ENCODE measurements at regions of chr20 and their contacts with region 1.

Region 1: GRCh38 chr20:63442100-63442493 is 30.4 kb downstream of the KCNQ2 start:
- DNase-seq: peak; percentile 29
- H3K4me3 ChIP-seq: no peak overlapping the region
- H3K27ac ChIP-seq: no peak overlapping the region
- H3K4me1 ChIP-seq: no peaks in the 10 kb centered on the region
- H3K27me3 ChIP-seq: peaks cover 2% of the 10 kb centered on the region
- CTCF ChIP-seq: peak; percentile 40 to 74

Region 2: GRCh38 chr20:63495741-63496595 is 53.9 kb after region 1 on chr20:
- CTCF ChIA-PET with region 1: no interaction called
- dilution Hi-C with region 1: no loop called
- in situ Hi-C with region 1: no loop called
- intact Hi-C with region 1: loop called (anchors 5 kb)
- DNase-seq: peak; percentile 35
- H3K4me3 ChIP-seq: peak overlapping the region in 1 of 3 experiments; percentile 28
- H3K27ac ChIP-seq: no peak overlapping the region
- H3K4me1 ChIP-seq: peaks cover 10% of the 10 kb centered on the region
- H3K27me3 ChIP-seq: peaks cover 5% of the 10 kb centered on the region
- CTCF ChIP-seq: peak; percentile 66 to 93

Region 3: DNA sequence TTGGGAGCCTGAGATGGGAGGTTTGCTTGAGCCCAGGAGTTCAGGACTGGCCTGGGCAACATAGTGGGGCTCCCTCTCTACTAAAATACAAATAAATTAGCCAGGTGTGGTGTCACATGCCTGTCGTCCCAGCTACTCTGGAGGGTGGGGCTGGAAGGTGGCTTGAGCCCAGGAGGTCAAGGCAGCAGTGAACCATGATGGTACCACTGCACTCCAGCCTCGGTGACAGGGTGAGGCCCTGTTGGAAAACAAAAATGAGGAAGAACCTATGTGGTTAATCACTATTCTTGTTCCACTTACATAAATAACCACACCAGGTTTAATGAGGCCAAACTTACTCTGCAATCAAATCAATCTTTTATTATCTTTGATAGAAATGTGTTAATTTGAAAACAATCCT is 83.9 kb after region 1 on chr20:
- CTCF ChIA-PET with region 1: no interaction called
- dilution Hi-C with region 1: no loop called
- in situ Hi-C with region 1: no loop called
- intact Hi-C with region 1: loop called (anchors 2 kb)
- DNase-seq: no peak
- H3K4me3 ChIP-seq: no peak overlapping the region
- H3K27ac ChIP-seq: no peak overlapping the region
- H3K4me1 ChIP-seq: peaks cover 11% of the 10 kb centered on the region
- H3K27me3 ChIP-seq: no peaks in the 10 kb centered on the region
- CTCF ChIP-seq: no peak

Region 4: DNA sequence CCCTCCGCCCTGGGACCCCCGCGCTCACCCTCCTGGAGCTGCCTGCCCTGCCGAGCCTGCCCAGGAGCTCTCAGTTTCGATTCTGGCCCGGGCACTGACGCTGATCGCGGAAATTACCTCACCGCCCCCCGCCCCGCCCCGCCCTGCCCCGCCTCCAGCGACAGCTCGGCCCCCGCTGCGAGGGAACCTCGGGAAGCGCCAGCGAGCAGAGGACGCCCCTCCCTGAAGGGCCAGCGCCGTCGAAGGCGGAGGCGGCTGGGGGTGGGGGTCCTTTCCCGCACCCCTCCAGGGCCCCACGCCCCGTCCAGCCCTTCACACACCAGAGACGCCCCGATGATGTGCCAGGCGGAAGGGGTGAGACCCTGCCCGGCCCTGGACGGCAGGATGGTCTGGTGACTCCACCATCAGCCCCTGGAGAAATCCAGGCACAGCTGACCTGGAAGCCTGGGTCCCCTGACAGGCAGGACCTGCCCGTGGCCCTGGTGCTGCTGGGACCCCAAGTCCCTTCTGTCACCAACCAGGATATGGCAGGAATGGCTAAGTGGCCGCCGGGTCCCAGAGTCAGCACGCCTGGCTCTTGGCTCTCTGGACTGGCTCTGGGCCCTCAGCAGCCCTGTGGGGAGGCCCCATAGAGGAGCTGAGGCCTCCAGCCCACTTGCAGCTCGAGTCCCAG is 132.2 kb after region 1 on chr20 and contains the start of gene HELZ2:
- CTCF ChIA-PET with region 1: interaction called, 15 read pairs
- dilution Hi-C with region 1: no loop called
- in situ Hi-C with region 1: no loop called
- intact Hi-C with region 1: loop called (anchors 5 kb)
- DNase-seq: peak; percentile 43
- H3K4me3 ChIP-seq: peak within 1 kb of the TSS; percentile 82 to 92 (median 89)
- H3K27ac ChIP-seq: peak within 1 kb of the TSS; percentile 62
- H3K4me1 ChIP-seq: peaks cover 13% of the 10 kb centered on the region
- H3K27me3 ChIP-seq: no peaks in the 10 kb centered on the region
- CTCF ChIP-seq: no peak
- total RNA-seq, gene HELZ2: 19.0 to 27.7 TPM